Naive thymus-derived CD4-positive, alpha-beta T cell (primary cell): ENCODE measurements at regions of chr6 and their contacts with region 1.

Region 1: GRCh38 chr6:157885211-157885788 is 62.3 kb downstream of the SNX9 start:
- DNase-seq: peak in 7 of 9 donors; percentile 74 to 90 (median 86)
- ATAC-seq: peak; percentile 89
- H3K4me3 ChIP-seq: no peak overlapping the region
- H3K4me3 Mint-ChIP-seq: peak overlapping the region; percentile 30 to 78 (median 54)
- H3K27ac ChIP-seq: peak overlapping the region; percentile 93
- H3K27ac Mint-ChIP-seq: peak overlapping the region; percentile 86 to 99 (median 96)
- H3K4me1 ChIP-seq: peaks cover 0 to 33% of the 10 kb centered on the region in 2 donors
- H3K4me1 Mint-ChIP-seq: peaks cover 31 to 92% (median 85%) of the 10 kb centered on the region in 7 donors
- H3K27me3 ChIP-seq: no peaks in the 10 kb centered on the region
- H3K27me3 Mint-ChIP-seq: peaks cover 0 to 3% (median 0%) of the 10 kb centered on the region in 5 donors

Region 2: GRCh38 chr6:156087487-156087886 is 1797.8 kb before region 1 on chr6:
- CTCF ChIA-PET with region 1: no interaction called
- POLR2A ChIA-PET with region 1: no interaction called
- intact Hi-C with region 1: no loop called
- DNase-seq: no peak
- ATAC-seq: no peak
- H3K4me3 ChIP-seq: no peak overlapping the region
- H3K4me3 Mint-ChIP-seq: no peak overlapping the region
- H3K27ac ChIP-seq: no peak overlapping the region
- H3K27ac Mint-ChIP-seq: no peak overlapping the region
- H3K4me1 ChIP-seq: no peaks in the 10 kb centered on the region
- H3K4me1 Mint-ChIP-seq: no peaks in the 10 kb centered on the region
- H3K27me3 ChIP-seq: no peaks in the 10 kb centered on the region
- H3K27me3 Mint-ChIP-seq: no peaks in the 10 kb centered on the region

Region 3: GRCh38 chr6:157823001-157823527 is 62.2 kb before region 1 on chr6 and contains the start of gene SNX9:
- CTCF ChIA-PET with region 1: no interaction called
- POLR2A ChIA-PET with region 1: interaction called, 3 read pairs
- intact Hi-C with region 1: loop called (anchors 1 kb)
- DNase-seq: peak in 8 of 9 donors; percentile 27 to 74 (median 56)
- ATAC-seq: peak; percentile 77
- H3K4me3 ChIP-seq: peak within 1 kb of the TSS; percentile 60
- H3K4me3 Mint-ChIP-seq: peak within 1 kb of the TSS; percentile 88 to 100 (median 96)
- H3K27ac ChIP-seq: peak within 1 kb of the TSS; percentile 96
- H3K27ac Mint-ChIP-seq: peak within 1 kb of the TSS; percentile 95 to 100 (median 99)
- H3K4me1 ChIP-seq: peaks cover 9 to 16% of the 10 kb centered on the region in 2 donors
- H3K4me1 Mint-ChIP-seq: peaks cover 15 to 70% (median 57%) of the 10 kb centered on the region in 7 donors
- H3K27me3 ChIP-seq: no peaks in the 10 kb centered on the region
- H3K27me3 Mint-ChIP-seq: peaks cover 0 to 42% (median 0%) of the 10 kb centered on the region in 5 donors
- total RNA-seq, gene SNX9: 13.4 to 39.2 (median 36.4) TPM

Region 4: DNA sequence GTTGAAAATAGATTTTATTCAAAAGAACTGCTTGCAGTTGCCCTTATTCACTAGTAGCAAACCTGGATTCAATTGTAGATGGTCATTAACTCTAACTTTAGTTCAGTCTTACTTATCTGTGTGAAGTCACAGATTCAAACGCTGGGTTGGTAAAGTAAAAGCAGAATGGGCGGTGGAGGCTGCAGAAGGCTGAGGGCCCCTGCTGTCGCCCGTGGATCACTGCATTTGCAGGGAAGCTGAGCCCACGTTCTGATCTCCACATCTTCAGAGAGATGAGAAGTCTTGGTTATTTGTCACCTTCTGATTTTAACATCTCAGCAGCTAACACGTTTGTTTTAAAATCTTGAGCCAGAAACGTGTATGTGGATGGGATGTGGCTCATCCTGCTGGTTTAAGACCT is 12.9 kb after region 1 on chr6:
- CTCF ChIA-PET with region 1: interaction called, 4 read pairs
- POLR2A ChIA-PET with region 1: interaction called, 3 read pairs
- intact Hi-C with region 1: loop called (anchors 1 kb)
- DNase-seq: peak in 7 of 9 donors; percentile 39 to 68 (median 48)
- ATAC-seq: peak; percentile 55
- H3K4me3 ChIP-seq: no peak overlapping the region
- H3K4me3 Mint-ChIP-seq: no peak overlapping the region
- H3K27ac ChIP-seq: no peak overlapping the region
- H3K27ac Mint-ChIP-seq: peak overlapping the region in 8 of 9 donors; percentile 6 to 92 (median 50)
- H3K4me1 ChIP-seq: peaks cover 0 to 12% of the 10 kb centered on the region in 2 donors
- H3K4me1 Mint-ChIP-seq: peaks cover 5 to 40% (median 26%) of the 10 kb centered on the region in 7 donors
- H3K27me3 ChIP-seq: no peaks in the 10 kb centered on the region
- H3K27me3 Mint-ChIP-seq: no peaks in the 10 kb centered on the region

Region 5: DNA sequence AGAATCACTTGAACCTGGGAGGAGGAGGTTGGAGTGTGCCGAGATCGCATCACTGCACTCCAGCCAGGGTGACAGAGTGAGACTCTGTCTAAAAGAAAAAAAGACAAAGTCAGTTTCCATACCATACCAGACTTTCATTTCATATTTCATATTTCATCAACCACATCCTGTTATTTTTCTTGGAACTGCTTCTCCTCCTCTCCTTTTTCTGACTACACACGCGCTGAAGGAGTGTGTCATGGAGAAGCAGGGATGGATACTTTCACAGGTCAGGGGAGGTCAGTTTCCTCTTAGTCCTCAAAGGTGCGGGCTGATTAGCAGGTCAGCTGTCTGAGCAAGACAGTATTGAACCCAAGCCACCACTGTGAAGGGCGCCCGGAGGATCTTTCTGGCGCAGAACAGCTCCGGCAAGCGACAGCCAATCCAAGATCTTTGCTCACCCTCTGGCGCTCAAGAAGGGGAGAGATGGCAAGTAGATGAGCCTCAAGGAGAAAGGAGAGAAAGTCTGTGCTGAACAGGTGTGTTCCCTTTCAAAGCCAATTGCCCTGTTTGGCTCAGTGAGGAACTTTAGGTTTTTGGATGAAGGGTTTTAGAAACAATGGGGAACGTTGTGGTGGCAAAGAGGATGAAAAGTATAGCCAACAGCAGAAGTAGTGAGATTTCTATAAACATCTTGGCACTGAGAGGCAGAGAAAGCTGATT is 77.5 kb after region 1 on chr6:
- CTCF ChIA-PET with region 1: no interaction called
- POLR2A ChIA-PET with region 1: no interaction called
- intact Hi-C with region 1: loop called in 1 of 2 experiments (anchors 5 kb)
- DNase-seq: peak in 4 of 9 donors; percentile 26 to 50 (median 41)
- ATAC-seq: peak; percentile 31
- H3K4me3 ChIP-seq: peak overlapping the region; percentile 14
- H3K4me3 Mint-ChIP-seq: peak overlapping the region; percentile 51 to 84 (median 72)
- H3K27ac ChIP-seq: peak overlapping the region; percentile 25
- H3K27ac Mint-ChIP-seq: peak overlapping the region; percentile 77 to 97 (median 89)
- H3K4me1 ChIP-seq: peaks cover 0 to 14% of the 10 kb centered on the region in 2 donors
- H3K4me1 Mint-ChIP-seq: peaks cover 8 to 32% (median 28%) of the 10 kb centered on the region in 7 donors
- H3K27me3 ChIP-seq: no peaks in the 10 kb centered on the region
- H3K27me3 Mint-ChIP-seq: no peaks in the 10 kb centered on the region